ENCODE measurements at regions of chr2 and their contacts with region 1.

Region 1: DNA sequence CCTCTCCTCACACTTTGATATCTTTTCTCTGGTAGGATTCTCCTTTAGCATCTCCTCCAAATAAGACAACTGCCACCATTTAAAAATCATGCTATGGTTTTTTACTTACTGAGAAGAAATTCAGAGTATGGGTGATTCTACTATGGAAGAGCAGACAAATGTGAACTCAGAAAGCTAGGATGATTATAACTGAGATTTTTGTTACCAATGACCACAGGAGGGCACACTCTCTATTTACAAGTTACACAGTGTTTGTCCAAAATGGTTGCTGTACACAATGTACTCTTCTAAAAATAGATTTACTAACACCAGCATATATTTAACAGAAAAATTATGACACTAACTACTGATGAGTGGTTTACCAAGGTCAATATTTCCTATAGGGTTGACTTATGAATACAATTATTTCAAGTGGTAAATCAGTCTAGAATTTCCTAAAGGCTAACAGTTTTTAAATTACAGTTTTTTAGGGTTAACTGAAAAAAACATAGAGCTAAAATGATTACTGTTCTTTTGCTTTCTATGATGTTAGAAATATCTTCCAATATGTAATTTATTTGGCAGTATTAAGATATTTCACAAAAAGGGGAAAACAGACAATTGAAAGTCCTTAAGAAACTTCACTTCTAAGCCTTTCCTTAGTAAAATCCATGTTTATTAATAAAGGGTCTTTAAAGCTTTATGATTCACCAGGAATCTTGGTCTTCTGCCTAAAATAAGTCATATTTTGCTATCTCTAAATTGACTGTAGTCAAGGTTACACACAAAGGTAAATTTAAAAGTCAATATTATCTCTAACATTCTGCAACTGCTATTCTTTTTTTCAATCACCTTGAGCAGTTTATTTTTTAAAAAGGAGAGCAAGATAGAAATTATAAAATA is 57.2 kb downstream of the MAP4K3 start:
- DNase-seq: peak in 1 of 2 experiments; percentile 50
- H3K4me3 ChIP-seq: no peak overlapping the region
- H3K27ac ChIP-seq: no peak overlapping the region; the same call in 1 of the 2 replicates
- H3K4me1 ChIP-seq: no peaks in the 10 kb centered on the region
- H3K27me3 ChIP-seq: no peaks in the 10 kb centered on the region
- CTCF ChIP-seq: peak; percentile 84

Region 2: GRCh38 chr2:39133215-39133851 is 246.6 kb before region 1 on chr2:
- CTCF ChIA-PET with region 1: interaction called, 16 read pairs
- POLR2A ChIA-PET with region 1: no interaction called
- intact Hi-C with region 1: no loop called
- DNase-seq: no peak
- H3K4me3 ChIP-seq: no peak overlapping the region
- H3K27ac ChIP-seq: no peak overlapping the region
- H3K4me1 ChIP-seq: no peaks in the 10 kb centered on the region
- H3K27me3 ChIP-seq: no peaks in the 10 kb centered on the region
- CTCF ChIP-seq: no peak

Region 3: DNA sequence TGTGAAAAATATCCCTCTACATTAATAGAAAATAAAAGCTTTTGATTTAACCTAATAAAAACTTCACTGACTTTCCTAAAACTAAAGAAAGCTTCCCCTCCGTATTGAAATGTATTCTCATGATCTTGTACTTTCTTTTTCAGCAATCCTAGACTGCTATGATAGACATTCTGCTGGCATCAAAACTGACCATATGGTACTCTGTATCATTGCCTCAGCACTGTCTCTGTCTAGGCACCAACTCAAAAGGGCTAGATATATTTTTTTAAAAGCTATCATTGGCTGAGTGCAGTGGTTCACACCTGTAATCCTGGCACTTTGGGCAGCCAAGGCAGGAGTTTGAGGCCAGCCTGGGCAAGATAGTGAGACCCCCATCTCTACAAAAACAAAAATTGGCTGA is 169.0 kb before region 1 on chr2:
- CTCF ChIA-PET with region 1: no interaction called
- POLR2A ChIA-PET with region 1: no interaction called
- intact Hi-C with region 1: no loop called
- DNase-seq: no peak
- H3K4me3 ChIP-seq: no peak overlapping the region
- H3K27ac ChIP-seq: no peak overlapping the region
- H3K4me1 ChIP-seq: no peaks in the 10 kb centered on the region
- H3K27me3 ChIP-seq: no peaks in the 10 kb centered on the region
- CTCF ChIP-seq: no peak

Region 4: DNA sequence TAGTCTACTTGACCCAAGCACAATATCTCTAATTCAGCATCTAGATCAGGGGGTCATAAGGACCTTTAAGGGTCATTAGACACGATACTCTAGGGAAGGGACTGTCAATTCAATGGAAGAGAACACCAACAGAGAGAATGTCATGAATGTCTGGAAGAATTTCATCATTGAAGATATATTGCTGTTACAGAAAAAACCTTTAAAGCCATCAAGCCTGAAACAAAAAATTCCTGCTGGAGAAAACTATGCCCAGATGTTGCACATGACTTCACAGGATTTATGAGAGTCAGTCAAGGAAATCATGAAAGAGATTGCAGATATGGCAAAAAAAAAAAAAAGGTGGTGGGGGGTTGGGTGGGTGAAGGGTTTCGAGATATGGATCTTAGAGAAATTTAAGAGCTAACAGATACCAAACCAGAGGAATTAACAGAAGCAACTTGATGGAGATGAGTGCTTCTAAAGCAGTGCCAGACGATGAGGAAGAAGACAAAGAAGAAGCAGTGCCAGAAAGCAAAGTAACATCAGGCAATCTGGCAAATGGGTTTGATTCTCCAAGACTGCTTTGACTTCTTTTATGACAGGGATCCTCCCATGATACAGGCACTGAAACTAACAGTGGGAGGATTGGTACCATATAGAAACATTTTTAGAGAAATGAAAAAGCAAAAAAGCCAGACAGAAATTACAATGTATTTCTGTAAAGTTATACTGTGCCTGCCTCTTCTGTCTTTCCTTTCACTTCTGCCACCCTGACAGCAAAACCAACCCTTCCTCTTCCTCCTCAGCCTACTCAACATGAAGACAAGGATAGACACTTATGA is 28.6 kb after region 1 on chr2:
- CTCF ChIA-PET with region 1: no interaction called
- POLR2A ChIA-PET with region 1: no interaction called
- intact Hi-C with region 1: loop called (anchors 1 kb)
- DNase-seq: no peak
- H3K4me3 ChIP-seq: no peak overlapping the region
- H3K27ac ChIP-seq: no peak overlapping the region
- H3K4me1 ChIP-seq: 0 out of 2 replicates have a peak, but pooled peaks cover 15% of the 10 kb centered on the region
- H3K27me3 ChIP-seq: no peaks in the 10 kb centered on the region
- CTCF ChIP-seq: no peak

Region 5: GRCh38 chr2:39696838-39697237 is 317.0 kb after region 1 on chr2:
- CTCF ChIA-PET with region 1: no interaction called
- POLR2A ChIA-PET with region 1: no interaction called
- intact Hi-C with region 1: loop called (anchors 1 kb)
- DNase-seq: no peak
- H3K4me3 ChIP-seq: no peak overlapping the region
- H3K27ac ChIP-seq: no peak overlapping the region
- H3K4me1 ChIP-seq: no peaks in the 10 kb centered on the region
- H3K27me3 ChIP-seq: no peaks in the 10 kb centered on the region
- CTCF ChIP-seq: peak; percentile 62